A549 (cell line): ENCODE measurements at regions of chr5 and their contacts with region 1.

Region 1: DNA sequence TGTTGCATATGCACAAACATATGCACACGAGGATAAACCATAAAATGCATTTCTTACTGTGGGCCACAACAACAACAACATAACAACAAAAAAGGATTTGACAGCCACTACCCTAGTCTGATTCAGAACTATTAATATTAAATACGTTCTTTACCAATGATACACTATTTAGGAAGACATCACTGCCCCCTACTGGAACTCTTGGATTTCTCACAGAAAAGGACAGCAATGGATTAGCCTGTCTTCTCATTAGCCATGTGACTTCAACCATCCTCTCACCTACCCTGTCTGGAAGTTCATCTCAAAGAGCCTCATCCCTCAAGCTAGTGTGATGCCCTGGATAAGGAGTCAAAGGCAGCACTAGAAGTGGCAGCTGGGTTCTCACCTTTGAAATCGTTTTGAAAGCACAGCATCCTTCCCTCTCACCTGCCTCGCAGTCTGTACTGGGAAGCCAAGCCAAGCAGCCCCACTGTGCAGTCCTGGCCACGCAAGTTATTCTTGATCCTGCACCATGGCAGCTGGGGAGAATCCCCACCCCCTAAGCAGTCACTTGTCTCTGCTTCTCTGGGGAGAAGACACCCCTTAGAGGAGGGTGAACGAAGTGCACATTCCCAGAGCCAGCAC is 64.6 kb downstream of the SH3TC2 start:
- DNase-seq: peak; percentile 35 to 65
- ATAC-seq: peak; percentile 57 to 68; a peak in 5 of 6 replicates
- H3K4me3 ChIP-seq: no peak overlapping the region
- H3K27ac ChIP-seq: no peak overlapping the region
- H3K4me1 ChIP-seq: peaks cover 20% of the 10 kb centered on the region
- CTCF ChIP-seq: peak; percentile 78
- EP300 ChIP-seq: no peak
- POLR2A ChIP-seq: no peak
- RAD21 ChIP-seq: peak; percentile 75 to 76

Region 2: DNA sequence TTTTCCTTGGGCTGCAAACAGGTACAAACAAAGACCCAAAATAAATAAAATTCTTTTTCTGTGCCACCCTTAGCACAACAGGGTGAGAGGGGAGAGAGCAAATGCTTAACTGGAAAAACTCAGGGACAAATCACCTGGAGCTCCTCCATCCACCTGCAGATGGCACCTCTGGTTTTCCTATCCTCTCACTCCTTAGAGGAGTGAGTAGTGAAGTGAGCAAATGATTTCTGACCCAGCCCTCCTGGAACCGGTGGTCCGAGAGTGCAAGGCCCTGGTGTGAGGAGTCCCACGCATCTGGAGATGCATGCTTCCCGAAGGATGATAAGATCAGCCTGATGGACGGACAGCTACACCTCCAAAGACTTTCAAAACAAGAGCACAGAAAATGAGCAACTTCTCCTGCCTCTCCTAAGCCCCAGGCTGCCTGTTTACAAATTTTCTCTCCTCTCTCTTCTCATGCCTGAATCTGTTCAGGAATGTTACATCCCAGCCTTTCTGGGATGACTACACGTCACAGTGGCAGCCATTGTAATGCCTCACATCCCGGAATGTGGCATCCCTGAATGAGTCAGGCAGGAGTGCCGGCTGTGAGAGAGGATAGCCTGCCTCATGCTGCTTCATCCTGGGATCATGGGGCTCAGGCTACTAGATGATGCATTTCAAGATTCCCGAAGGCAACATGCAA is 85.4 kb before region 1 on chr5:
- CTCF ChIA-PET with region 1: interaction called, 18 read pairs
- POLR2A ChIA-PET with region 1: no interaction called
- DNase-seq: peak; percentile 82
- ATAC-seq: peak; percentile 91 to 96
- H3K4me3 ChIP-seq: no peak overlapping the region
- H3K27ac ChIP-seq: peak overlapping the region; percentile 43 to 59; a peak in 5 of 6 replicates
- H3K4me1 ChIP-seq: peaks cover 37% of the 10 kb centered on the region
- CTCF ChIP-seq: peak; percentile 52
- EP300 ChIP-seq: peak in 1 of 2 experiments; percentile 29; a peak in 1 of 5 replicates
- POLR2A ChIP-seq: no peak
- RAD21 ChIP-seq: peak; percentile 65 to 66

Region 3: DNA sequence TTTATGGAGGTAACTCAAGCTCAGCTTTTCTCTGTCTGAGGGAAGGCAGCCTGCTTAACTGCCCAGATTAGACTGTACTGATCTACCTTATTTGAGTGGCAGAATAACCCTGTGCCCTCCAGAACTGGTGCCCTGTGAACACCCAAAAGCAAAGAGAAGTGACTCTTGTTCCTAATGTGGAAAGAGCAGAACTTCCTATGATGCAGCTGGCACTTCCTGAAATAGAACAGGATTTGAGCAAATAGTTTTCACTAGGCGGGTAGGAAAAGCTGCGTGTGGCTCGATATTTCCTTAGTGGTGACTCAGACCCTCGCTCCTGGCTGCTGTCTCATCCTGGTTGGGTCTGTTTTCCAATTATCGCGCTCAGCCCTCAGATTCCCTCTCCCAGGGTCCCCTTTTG is 25.3 kb before region 1 on chr5:
- CTCF ChIA-PET with region 1: interaction called, 13 read pairs
- POLR2A ChIA-PET with region 1: no interaction called
- DNase-seq: peak; percentile 68 to 79
- ATAC-seq: peak; percentile 91
- H3K4me3 ChIP-seq: no peak overlapping the region
- H3K27ac ChIP-seq: peak overlapping the region; percentile 56 to 81
- H3K4me1 ChIP-seq: peaks cover 18% of the 10 kb centered on the region
- CTCF ChIP-seq: no peak
- EP300 ChIP-seq: no peak
- POLR2A ChIP-seq: no peak
- RAD21 ChIP-seq: no peak

Region 4: DNA sequence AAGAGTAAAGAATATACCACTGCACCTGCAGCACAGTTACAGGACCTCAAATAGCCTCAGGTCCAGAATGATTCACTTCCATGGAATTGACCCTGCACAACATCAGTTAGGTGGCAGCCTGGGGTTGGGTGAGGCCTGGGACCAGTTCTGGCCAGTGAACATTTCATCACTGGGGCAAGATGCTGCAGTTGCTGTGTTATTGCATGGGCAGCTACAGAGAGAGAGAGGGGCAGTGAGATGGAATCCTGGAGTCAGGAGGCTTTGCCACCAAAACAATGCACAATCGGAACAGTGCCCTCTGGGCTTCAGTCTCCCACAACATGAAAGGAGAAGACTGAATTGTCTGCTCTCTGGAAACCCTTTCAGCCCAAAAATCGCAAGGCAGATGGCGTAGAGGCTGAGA is 12.8 kb after region 1 on chr5:
- CTCF ChIA-PET with region 1: interaction called, 10 read pairs
- POLR2A ChIA-PET with region 1: no interaction called
- DNase-seq: peak in 1 of 2 experiments; percentile 8
- ATAC-seq: peak; percentile 51 to 75
- H3K4me3 ChIP-seq: no peak overlapping the region
- H3K27ac ChIP-seq: no peak overlapping the region
- H3K4me1 ChIP-seq: no peaks in the 10 kb centered on the region
- CTCF ChIP-seq: no peak
- EP300 ChIP-seq: no peak
- POLR2A ChIP-seq: no peak
- RAD21 ChIP-seq: no peak

Region 5: GRCh38 chr5:149153751-149154610 is 155.7 kb after region 1 on chr5:
- CTCF ChIA-PET with region 1: no interaction called
- POLR2A ChIA-PET with region 1: no interaction called
- DNase-seq: peak in 1 of 2 experiments; percentile 35
- ATAC-seq: peak; percentile 54 to 68; a peak in 5 of 6 replicates
- H3K4me3 ChIP-seq: no peak overlapping the region
- H3K27ac ChIP-seq: peak overlapping the region; percentile 41 to 61
- H3K4me1 ChIP-seq: peaks cover 23% of the 10 kb centered on the region
- CTCF ChIP-seq: no peak
- EP300 ChIP-seq: no peak
- POLR2A ChIP-seq: no peak
- RAD21 ChIP-seq: no peak

Region 6: DNA sequence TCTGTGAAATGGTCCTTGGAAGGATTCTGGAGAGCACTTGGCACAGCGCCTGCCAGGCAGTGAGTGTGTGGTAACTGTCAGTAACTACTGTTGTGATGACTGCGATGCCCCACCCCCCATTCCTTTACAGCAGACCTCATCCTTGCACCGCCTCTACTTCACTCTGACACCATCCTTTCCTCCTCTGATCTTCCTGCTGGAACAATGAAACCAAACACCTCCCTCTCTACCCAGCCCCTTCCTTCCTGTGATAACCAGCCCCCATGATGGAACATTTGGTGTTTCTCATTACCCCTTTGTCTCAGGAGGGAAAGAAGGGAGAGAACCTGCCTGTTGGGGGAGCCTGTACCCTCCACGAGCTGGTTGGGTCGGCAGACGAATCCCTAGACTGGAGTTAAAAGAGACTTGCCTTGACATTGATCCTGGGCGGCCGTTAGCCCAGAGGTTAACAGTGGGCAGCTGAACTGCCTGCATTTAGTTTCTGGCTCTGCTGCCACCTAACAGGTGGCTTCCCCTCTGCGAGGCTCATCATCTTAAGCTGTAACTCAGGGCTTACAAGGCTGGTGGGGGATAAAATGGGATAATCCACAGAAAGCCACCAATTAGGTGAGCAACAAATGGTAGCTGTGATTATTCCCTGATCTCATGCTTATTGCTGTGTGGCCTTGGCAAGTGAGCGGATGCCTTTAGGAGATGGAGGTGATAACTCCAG is 312.8 kb after region 1 on chr5:
- CTCF ChIA-PET with region 1: no interaction called
- POLR2A ChIA-PET with region 1: no interaction called
- DNase-seq: peak in 1 of 2 experiments; percentile 19
- ATAC-seq: no peak
- H3K4me3 ChIP-seq: no peak overlapping the region
- H3K27ac ChIP-seq: no peak overlapping the region
- H3K4me1 ChIP-seq: no peaks in the 10 kb centered on the region
- CTCF ChIP-seq: no peak
- EP300 ChIP-seq: no peak
- POLR2A ChIP-seq: no peak
- RAD21 ChIP-seq: no peak